CD4-positive, alpha-beta memory T cell (primary cell): ENCODE measurements at regions of chr6 and their contacts with region 1.

Region 1: GRCh38 chr6:27753668-27754407 is 158.4 kb downstream of the OR2B2 start:
- DNase-seq: peak; percentile 27 to 66 (median 44)
- H3K4me3 ChIP-seq: peak overlapping the region; percentile 50 to 63
- H3K4me3 Mint-ChIP-seq: peak overlapping the region; percentile 85 to 99 (median 93)
- H3K27ac ChIP-seq: no peak overlapping the region
- H3K27ac Mint-ChIP-seq: peak overlapping the region; percentile 16 to 100 (median 99)
- H3K4me1 ChIP-seq: peaks cover 20% of the 10 kb centered on the region
- H3K4me1 Mint-ChIP-seq: peaks cover 15 to 47% (median 26%) of the 10 kb centered on the region in 4 donors
- H3K27me3 ChIP-seq: no peaks in the 10 kb centered on the region
- H3K27me3 Mint-ChIP-seq: peaks cover 0 to 5% of the 10 kb centered on the region in 2 donors

Region 2: DNA sequence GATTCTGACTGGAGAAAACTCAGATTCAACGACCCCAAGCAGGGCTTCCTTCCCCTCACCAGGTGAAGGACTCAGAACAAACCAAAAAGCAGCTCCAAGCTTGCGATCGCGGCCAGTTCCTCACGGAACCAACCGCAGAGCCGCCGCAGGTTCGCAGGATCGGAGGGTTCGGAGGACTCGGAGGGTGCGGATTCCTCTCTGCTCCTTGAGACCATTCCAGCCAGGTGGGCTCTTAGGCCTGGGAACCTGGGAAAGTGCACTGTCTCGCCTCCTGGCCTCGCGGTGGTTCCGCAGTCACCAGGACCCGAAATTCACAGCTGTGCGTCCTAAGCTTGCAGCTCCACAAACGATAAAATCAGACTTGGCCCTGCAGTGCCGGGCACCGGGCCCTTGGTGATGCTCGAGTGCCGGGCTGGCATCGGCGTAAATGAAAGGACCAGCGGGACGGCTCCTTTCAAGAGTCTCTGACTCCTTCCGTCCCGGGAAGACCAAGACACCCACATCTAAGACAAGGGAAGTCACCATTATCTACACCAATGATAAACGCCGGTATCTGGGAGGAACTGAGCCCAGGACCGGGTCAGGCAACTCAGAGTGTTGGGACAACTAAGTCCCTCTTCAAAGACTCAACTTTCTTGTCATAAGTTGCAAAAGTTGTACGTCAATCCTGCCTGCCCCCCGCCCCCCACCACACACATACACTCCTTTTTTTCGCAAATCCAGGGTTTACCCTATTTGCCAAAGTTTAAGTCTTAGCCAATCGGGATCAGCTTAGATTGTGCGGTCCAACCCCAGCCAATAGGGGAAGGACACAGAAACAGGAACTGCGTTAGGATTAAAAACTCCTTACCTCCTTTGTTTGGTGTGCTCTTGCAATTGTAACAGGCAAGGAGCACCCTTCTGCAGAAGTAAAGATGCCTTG is 576.1 kb before region 1 on chr6:
- CTCF ChIA-PET with region 1: interaction called, 18 read pairs
- POLR2A ChIA-PET with region 1: interaction called, 8 read pairs
- intact Hi-C with region 1: loop called (anchors 1 kb)
- DNase-seq: peak; percentile 68 to 80 (median 70)
- H3K4me3 ChIP-seq: peak overlapping the region; percentile 98
- H3K4me3 Mint-ChIP-seq: peak overlapping the region; percentile 95 to 99 (median 98)
- H3K27ac ChIP-seq: peak overlapping the region; percentile 77
- H3K27ac Mint-ChIP-seq: peak overlapping the region; percentile 86 to 100 (median 93)
- H3K4me1 ChIP-seq: peaks cover 7% of the 10 kb centered on the region
- H3K4me1 Mint-ChIP-seq: peaks cover 5 to 29% (median 13%) of the 10 kb centered on the region in 4 donors
- H3K27me3 ChIP-seq: no peaks in the 10 kb centered on the region
- H3K27me3 Mint-ChIP-seq: peaks cover 3 to 4% of the 10 kb centered on the region in 2 donors

Region 3: DNA sequence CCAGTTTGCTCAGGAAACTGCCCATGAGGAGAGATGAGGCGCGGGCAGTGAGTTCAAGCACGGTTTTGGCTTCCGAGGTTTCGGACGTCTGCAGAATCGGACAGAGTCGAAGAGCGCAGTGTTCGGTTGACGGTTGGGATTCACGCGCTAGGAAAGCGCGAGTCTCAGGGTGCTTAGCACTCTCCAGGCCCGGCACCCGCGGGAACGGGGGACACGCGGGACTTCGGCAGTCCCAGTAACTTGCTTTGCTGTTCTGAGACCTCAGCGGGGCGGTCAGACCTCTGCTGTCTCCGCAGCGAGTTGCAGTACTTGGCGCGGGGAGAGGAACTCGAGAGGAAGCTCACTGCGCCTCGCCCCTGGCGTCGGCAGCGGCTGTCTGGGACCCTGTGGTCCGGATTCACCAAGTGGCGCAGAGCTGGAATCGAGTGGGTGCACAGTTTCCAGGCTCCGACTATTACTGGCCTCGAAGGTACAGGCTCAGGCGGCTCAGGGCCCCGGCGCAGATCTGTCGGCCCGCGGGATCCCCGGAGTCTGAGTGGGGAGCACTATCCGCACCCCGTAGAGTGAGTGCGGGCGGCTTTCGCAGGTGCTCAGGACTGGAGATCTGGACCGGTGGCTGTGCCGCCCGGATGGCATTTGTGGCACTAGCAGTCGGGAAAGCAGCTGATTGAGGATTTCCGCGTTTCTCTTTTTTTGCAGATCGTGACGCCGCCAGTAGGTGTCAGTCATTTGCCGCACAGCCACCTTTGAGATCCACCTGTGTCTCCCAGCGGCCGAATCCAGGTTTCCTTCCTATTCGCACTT is 441.5 kb before region 1 on chr6 and contains the start of gene POM121L2:
- CTCF ChIA-PET with region 1: interaction called, 23 read pairs
- POLR2A ChIA-PET with region 1: interaction called, 4 read pairs
- intact Hi-C with region 1: loop called (anchors 1 kb)
- DNase-seq: peak; percentile 50 to 68 (median 61)
- H3K4me3 ChIP-seq: peak within 1 kb of the TSS; percentile 44 to 57
- H3K4me3 Mint-ChIP-seq: peak within 1 kb of the TSS; percentile 81 to 86 (median 83)
- H3K27ac ChIP-seq: no peak within 1 kb of the TSS
- H3K27ac Mint-ChIP-seq: peak within 1 kb of the TSS in 3 of 7 donors; percentile 7 to 37 (median 21)
- H3K4me1 ChIP-seq: peaks cover 5% of the 10 kb centered on the region
- H3K4me1 Mint-ChIP-seq: peaks cover 0 to 14% (median 7%) of the 10 kb centered on the region in 4 donors
- H3K27me3 ChIP-seq: peaks cover 26% of the 10 kb centered on the region
- H3K27me3 Mint-ChIP-seq: peaks cover 39 to 55% of the 10 kb centered on the region in 2 donors
- total RNA-seq, gene POM121L2: not detected

Region 4: DNA sequence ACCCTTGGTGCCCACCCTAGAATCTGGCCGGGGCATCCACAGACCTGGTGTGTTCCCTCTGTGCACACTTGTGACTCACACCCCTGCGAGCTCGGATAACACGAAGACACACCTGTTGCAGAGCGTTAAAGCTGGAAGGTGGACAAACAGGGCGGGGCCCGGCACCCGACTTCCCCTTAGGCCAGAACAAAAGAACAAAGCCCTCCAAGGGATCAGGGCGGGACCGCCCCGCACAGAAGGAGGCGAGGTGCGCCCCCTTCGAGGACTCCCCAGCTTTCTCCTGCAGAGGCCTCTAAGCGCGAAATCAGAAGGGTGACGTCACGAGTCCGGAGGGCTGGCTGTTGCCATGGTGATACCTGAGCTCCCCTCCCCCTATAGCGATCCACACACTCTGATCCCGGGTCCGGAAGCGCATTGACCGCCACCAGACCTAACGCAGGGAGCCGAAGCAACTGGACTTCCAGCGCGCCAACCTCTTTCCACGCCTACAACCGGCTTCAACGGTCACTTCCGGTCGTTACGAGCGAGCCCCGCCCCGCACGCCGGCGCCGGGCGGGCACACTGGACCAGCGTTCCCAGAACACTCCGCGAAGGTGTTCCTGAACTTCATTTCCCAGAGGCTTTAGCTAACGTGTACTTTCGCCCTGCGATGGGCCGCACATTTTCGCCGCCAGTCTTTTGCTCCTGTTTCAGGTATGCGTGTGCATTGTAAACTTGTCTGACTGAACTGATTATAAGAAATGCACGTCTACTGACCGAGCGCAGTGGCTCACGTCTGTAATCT is 281.0 kb before region 1 on chr6 and contains the start of gene ZNF184:
- CTCF ChIA-PET with region 1: interaction called, 10 read pairs
- POLR2A ChIA-PET with region 1: interaction called, 39 read pairs
- intact Hi-C with region 1: loop called (anchors 1 kb)
- DNase-seq: peak; percentile 86 to 90 (median 89)
- H3K4me3 ChIP-seq: peak within 1 kb of the TSS; percentile 70 to 98
- H3K4me3 Mint-ChIP-seq: peak within 1 kb of the TSS; percentile 92 to 99 (median 96)
- H3K27ac ChIP-seq: peak within 1 kb of the TSS; percentile 92
- H3K27ac Mint-ChIP-seq: peak within 1 kb of the TSS; percentile 93 to 99 (median 96)
- H3K4me1 ChIP-seq: peaks cover 56% of the 10 kb centered on the region
- H3K4me1 Mint-ChIP-seq: peaks cover 33 to 65% (median 43%) of the 10 kb centered on the region in 4 donors
- H3K27me3 ChIP-seq: no peaks in the 10 kb centered on the region
- H3K27me3 Mint-ChIP-seq: no peaks in the 10 kb centered on the region
- total RNA-seq, gene ZNF184: 15.2 to 17.4 TPM

Region 5: DNA sequence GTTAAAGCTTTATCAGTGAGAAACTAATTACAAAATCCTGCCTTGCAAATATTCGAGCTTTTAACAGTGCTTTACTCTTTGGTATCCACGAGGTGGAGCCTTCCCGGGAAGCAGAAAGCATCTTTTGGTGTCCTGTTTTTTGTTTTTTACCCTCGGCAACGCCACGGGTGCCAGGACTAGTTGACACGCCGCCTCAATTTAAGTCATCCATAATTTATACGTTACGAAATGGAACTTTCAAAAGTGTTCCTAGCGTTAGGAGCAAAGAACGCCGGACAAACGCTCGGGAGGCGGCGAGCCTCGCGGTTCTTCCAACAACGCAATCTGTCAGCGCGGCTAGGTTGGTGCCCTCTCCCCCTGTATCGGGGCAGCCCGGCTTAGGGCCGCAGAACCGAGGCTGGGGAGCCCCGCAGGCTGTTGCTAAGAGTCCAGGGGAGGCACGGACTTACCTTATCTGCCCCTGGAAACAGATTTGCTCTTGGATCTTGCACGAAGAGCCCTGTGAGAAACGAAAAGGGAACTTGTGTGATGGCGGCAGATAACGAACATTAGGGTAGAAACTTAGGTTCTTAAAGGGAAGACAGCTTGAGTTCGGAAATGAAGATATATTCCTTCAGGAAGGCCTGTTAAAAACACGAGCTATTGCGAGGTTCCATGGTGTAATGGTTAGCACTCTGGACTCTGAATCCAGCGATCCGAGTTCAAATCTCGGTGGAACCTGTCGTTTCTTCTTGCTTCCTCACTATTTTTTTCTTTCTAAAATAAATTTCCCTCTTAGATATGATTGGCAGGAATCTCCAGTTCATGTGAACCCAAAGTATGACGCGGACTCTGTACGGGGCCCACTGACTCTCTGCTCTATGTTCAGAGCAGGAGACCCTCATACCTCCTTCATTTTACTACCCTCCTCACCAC is 234.7 kb before region 1 on chr6:
- CTCF ChIA-PET with region 1: interaction called, 47 read pairs
- POLR2A ChIA-PET with region 1: interaction called, 26 read pairs
- intact Hi-C with region 1: loop called (anchors 1 kb)
- DNase-seq: peak; percentile 63 to 72 (median 68)
- H3K4me3 ChIP-seq: peak overlapping the region; percentile 66 to 76
- H3K4me3 Mint-ChIP-seq: peak overlapping the region; percentile 87 to 93 (median 89)
- H3K27ac ChIP-seq: peak overlapping the region; percentile 64
- H3K27ac Mint-ChIP-seq: peak overlapping the region; percentile 51 to 91 (median 88)
- H3K4me1 ChIP-seq: peaks cover 9% of the 10 kb centered on the region
- H3K4me1 Mint-ChIP-seq: peaks cover 12 to 31% (median 18%) of the 10 kb centered on the region in 4 donors
- H3K27me3 ChIP-seq: no peaks in the 10 kb centered on the region
- H3K27me3 Mint-ChIP-seq: peaks cover 9 to 20% of the 10 kb centered on the region in 2 donors

Region 6: DNA sequence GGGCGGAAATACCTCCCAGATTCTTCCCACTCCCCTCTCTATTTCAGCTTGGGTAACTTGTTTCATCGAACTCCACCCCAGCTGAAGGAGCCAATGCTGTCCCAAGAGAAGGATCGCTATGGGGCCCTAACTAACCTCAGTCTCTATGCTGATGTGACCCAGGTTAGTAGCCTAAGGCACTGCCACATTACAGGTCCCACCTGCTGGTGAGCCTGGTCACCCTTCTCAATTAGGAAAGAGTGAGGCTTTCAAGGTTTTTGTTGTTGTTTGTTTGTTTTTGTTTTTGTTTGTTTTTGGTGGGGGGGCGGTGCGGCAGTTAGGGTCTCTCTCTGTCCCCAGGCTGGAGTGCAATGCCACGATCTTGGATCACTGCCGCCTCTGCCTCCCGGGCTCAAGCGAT is 10.0 kb before region 1 on chr6:
- CTCF ChIA-PET with region 1: interaction called, 47 read pairs
- POLR2A ChIA-PET with region 1: interaction called, 12 read pairs
- intact Hi-C with region 1: no loop called
- DNase-seq: no peak
- H3K4me3 ChIP-seq: no peak overlapping the region
- H3K4me3 Mint-ChIP-seq: peak overlapping the region in 2 of 8 donors; percentile 44 to 60
- H3K27ac ChIP-seq: no peak overlapping the region
- H3K27ac Mint-ChIP-seq: no peak overlapping the region
- H3K4me1 ChIP-seq: no peaks in the 10 kb centered on the region
- H3K4me1 Mint-ChIP-seq: no peaks in the 10 kb centered on the region
- H3K27me3 ChIP-seq: no peaks in the 10 kb centered on the region
- H3K27me3 Mint-ChIP-seq: peaks cover 17 to 19% of the 10 kb centered on the region in 2 donors

Region 7: DNA sequence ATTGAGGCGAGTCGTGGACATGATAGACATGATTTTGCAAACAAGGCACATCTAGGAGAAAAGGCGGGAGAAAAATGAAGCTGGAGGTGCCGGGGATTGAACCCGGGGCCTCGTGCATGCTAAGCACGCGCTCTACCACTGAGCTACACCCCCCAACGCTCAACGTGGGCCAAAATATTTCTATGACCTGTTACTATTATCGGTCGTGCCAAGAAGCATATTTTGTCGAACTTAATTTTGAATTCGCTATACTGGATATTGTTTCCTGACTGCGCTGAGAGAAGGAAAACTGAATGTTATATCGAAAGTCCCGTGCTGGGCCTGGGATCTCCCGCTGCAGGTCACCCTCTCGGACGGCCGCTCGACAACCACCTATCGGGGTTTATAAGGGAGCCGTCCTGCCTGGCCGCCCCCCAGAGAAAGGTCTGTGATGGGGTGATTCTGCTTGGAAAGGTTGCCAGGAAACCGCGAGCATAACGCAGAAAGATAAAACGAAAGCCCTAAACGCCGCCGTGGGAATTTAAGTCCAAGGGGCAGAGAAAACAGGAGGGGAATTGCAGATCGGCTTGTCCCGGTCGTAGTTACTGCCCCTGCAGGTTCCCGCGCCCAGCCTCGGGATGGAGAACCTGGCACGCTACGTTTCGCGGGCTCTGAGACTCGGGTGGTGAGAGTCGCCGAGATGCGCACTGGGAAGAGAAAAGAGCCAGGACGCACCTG is 1109.9 kb after region 1 on chr6:
- CTCF ChIA-PET with region 1: no interaction called
- POLR2A ChIA-PET with region 1: no interaction called
- intact Hi-C with region 1: loop called (anchors 10 kb)
- DNase-seq: peak; percentile 88 to 91 (median 89)
- H3K4me3 ChIP-seq: peak overlapping the region; percentile 53 to 85
- H3K4me3 Mint-ChIP-seq: peak overlapping the region; percentile 92 to 97 (median 94)
- H3K27ac ChIP-seq: peak overlapping the region; percentile 45
- H3K27ac Mint-ChIP-seq: peak overlapping the region; percentile 79 to 99 (median 97)
- H3K4me1 ChIP-seq: peaks cover 14% of the 10 kb centered on the region
- H3K4me1 Mint-ChIP-seq: peaks cover 21 to 64% (median 43%) of the 10 kb centered on the region in 4 donors
- H3K27me3 ChIP-seq: no peaks in the 10 kb centered on the region
- H3K27me3 Mint-ChIP-seq: peaks cover 4 to 5% of the 10 kb centered on the region in 2 donors